ENCODE measurements at regions of chr15 and their contacts with region 1.

Region 1: DNA sequence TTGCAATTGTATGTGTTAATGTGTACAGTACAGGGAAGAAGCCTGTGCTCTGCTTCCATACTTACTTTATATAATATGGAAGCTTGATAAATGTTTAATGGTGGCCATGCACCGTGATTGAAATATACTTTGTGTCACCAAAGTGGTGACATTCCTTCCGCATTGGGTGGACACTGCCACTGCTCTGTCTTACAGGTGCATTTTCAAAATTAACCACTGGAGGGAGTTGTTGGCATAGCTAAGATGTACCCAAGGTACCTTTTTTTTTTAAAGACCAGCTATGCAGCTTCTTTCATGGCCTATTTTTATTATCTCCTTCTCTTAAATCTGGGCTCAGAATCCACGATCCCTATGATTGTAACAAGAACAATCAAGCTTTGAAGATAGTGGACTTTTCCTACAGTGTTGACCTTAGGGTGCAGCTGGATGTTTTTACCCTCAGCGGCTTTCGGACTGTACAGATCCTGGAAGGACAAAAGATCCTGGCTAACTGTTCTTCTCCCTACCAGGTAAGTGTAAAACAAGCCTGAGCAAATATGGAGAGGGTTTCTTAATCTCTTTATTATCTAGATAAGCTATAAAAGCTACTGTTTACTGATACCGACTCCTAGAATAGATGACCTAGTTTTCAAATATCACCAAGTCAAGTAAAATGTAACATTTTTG is 21.6 kb upstream of the PAK6 start:
- DNase-seq: no peak
- H3K4me3 ChIP-seq: no peak overlapping the region
- H3K27ac ChIP-seq: no peak overlapping the region
- H3K4me1 ChIP-seq: no peaks in the 10 kb centered on the region
- H3K27me3 ChIP-seq: no peaks in the 10 kb centered on the region
- CTCF ChIP-seq: peak; percentile 84 to 92 (median 90)
- POLR2A ChIP-seq: no peak

Region 2: DNA sequence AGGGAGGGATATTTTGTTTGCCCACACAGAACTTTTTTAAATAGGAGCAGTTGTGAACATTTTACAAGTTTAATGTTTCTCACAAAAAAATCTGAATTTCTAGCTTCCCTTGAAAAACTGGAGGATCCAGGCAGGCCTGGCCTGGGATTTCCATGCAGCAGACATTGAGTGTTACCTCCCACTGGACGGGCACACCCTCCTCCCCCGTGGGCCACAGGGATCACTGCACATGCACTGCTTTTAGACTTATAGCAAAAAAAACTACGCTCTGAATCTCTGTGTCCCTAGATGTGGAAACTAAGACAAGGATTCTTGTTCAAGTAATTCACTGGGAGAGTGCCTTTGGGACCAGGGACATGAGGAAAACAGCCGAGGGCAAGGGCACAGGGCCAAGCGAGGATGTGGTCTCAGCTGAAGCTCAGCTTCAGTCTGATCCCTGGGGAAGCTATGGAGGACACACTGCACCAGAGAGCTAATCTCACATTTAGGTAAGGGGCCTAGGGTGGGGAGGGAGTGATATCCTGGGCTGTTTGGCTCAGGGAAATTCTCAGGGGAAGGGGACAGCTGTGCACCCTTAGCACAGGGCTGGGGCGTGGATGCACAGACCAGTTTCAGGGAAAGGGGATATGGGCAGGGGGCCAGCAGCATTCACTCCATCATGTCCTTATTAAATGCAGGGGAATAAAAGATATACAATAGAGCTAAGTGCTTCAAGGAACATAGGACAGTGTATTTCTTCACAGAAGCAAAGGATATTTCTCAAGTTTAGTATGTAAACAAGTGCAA is 480.7 kb before region 1 on chr15:
- intact Hi-C with region 1: no loop called
- DNase-seq: no peak
- H3K4me3 ChIP-seq: no peak overlapping the region
- H3K27ac ChIP-seq: no peak overlapping the region
- H3K4me1 ChIP-seq: no peaks in the 10 kb centered on the region
- H3K27me3 ChIP-seq: no peaks in the 10 kb centered on the region
- CTCF ChIP-seq: no peak
- POLR2A ChIP-seq: no peak

Region 3: GRCh38 chr15:39976291-39977274 is 240.7 kb before region 1 on chr15:
- intact Hi-C with region 1: no loop called
- DNase-seq: no peak
- H3K4me3 ChIP-seq: peak overlapping the region; percentile 51 to 61
- H3K27ac ChIP-seq: peak overlapping the region; percentile 73
- H3K4me1 ChIP-seq: peaks cover 10% of the 10 kb centered on the region
- H3K27me3 ChIP-seq: no peaks in the 10 kb centered on the region
- CTCF ChIP-seq: peak in 2 of 3 experiments; percentile 21 to 79
- POLR2A ChIP-seq: no peak

Region 4: GRCh38 chr15:40274350-40275274 is 57.3 kb after region 1 on chr15:
- intact Hi-C with region 1: loop called (anchors 5 kb)
- DNase-seq: no peak
- H3K4me3 ChIP-seq: no peak overlapping the region
- H3K27ac ChIP-seq: no peak overlapping the region
- H3K4me1 ChIP-seq: peaks cover 3% of the 10 kb centered on the region
- H3K27me3 ChIP-seq: no peaks in the 10 kb centered on the region
- CTCF ChIP-seq: peak; percentile 100
- POLR2A ChIP-seq: no peak

Region 5: DNA sequence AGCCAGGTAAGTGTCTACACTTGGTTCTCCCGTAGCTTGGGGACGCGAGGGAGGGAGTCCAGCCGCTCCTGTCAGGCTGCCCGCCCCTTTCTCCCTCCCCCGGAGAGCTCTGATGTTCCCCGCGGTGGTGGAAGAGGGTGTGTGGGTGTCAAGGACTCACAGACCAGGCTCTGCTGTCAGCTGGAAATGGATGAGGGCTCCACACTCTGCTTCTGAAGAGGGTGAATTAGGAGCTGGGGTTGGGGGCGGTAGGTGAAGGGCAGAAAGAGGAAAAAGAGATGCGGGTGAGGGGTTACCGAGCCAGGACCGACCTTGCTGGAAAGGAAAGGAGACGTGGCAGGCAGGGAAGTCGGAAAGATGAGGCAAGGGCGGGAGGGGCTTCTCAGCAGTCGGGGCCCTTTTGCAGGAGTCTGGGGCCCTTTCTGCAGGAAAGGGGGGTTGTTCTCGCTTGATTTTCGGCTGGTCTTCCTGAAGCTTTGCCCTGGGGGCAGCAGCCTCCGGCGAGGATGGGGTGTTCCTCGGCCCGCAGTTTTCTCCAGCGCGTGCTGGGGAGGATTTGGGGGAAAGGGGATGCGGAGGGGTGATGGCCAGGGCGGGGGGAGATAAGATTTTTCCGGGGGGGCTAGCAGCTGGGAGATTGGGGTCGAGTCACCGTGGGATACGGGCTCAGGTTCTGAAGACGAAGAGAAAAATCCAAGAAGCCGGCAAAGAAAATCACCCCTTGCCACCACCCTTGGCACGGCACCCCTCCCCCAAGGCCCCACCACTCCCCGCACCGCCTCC is 222.9 kb after region 1 on chr15:
- intact Hi-C with region 1: loop called (anchors 10 kb)
- DNase-seq: no peak
- H3K4me3 ChIP-seq: peak overlapping the region; percentile 88 to 99
- H3K27ac ChIP-seq: peak overlapping the region; percentile 88
- H3K4me1 ChIP-seq: peaks cover 72% of the 10 kb centered on the region
- H3K27me3 ChIP-seq: no peaks in the 10 kb centered on the region
- CTCF ChIP-seq: no peak
- POLR2A ChIP-seq: no peak